GM12878 (cell line): ENCODE measurements at regions of chr20 and their contacts with region 1.

Region 1: DNA sequence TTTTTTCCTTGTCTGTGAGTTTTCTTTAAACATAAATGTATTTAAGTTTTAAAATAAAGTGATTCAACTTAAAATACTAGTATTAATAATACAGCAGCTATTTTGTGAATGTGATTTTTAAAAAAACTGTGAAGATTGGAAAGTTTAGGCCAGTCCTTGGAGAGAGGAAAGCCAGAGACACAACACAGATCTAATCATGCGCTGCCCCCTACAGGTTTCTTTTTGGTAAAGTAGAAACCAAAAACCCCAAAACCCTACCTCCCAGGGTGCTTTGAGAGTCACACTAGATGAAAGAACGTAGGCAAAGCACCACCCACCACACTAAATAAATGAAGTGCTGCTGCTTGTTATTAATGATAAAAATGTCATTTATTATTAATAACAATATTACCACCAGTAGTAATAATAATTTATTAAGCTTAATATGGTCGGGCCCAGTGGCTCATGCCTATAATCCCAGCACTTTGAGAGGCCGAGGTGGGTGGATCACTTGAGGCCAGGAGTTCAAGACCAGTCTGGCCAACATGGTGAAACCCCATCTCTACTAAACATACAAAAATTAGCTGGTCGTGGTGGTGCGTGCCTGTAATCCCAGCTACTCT is 33.7 kb downstream of the SLC9A8 start:
- DNase-seq: no peak
- ATAC-seq: peak; percentile 96
- H3K4me3 ChIP-seq: no peak overlapping the region
- H3K27ac ChIP-seq: no peak overlapping the region
- H3K4me1 ChIP-seq: peaks cover 4% of the 10 kb centered on the region; the same call in 1 of the 2 replicates
- H3K27me3 ChIP-seq: no peaks in the 10 kb centered on the region
- CTCF ChIP-seq: peak; percentile 51 to 77 (median 60)
- EP300 ChIP-seq: no peak
- POLR2A ChIP-seq: no peak
- RAD21 ChIP-seq: peak; percentile 86

Region 2: GRCh38 chr20:49620364-49621240 is 225.7 kb before region 1 on chr20:
- CTCF ChIA-PET with region 1: interaction called, 14 read pairs
- POLR2A ChIA-PET with region 1: interaction called, 6 read pairs
- RAD21 ChIA-PET with region 1: interaction called, 9 read pairs
- SMC1A ChIA-PET with region 1: interaction called, 22 read pairs
- in situ Hi-C with region 1: no loop called
- intact Hi-C with region 1: no loop called
- DNase-seq: peak; percentile 100
- ATAC-seq: peak; percentile 92
- H3K4me3 ChIP-seq: peak overlapping the region; percentile 8; the same call in 1 of the 2 replicates
- H3K27ac ChIP-seq: peak overlapping the region; percentile 57
- H3K4me1 ChIP-seq: peaks cover 37% of the 10 kb centered on the region
- H3K27me3 ChIP-seq: no peaks in the 10 kb centered on the region
- CTCF ChIP-seq: no peak
- EP300 ChIP-seq: peak; percentile 91 to 92
- POLR2A ChIP-seq: no peak
- RAD21 ChIP-seq: peak; percentile 17; the same call in 1 of the 2 replicates

Region 3: DNA sequence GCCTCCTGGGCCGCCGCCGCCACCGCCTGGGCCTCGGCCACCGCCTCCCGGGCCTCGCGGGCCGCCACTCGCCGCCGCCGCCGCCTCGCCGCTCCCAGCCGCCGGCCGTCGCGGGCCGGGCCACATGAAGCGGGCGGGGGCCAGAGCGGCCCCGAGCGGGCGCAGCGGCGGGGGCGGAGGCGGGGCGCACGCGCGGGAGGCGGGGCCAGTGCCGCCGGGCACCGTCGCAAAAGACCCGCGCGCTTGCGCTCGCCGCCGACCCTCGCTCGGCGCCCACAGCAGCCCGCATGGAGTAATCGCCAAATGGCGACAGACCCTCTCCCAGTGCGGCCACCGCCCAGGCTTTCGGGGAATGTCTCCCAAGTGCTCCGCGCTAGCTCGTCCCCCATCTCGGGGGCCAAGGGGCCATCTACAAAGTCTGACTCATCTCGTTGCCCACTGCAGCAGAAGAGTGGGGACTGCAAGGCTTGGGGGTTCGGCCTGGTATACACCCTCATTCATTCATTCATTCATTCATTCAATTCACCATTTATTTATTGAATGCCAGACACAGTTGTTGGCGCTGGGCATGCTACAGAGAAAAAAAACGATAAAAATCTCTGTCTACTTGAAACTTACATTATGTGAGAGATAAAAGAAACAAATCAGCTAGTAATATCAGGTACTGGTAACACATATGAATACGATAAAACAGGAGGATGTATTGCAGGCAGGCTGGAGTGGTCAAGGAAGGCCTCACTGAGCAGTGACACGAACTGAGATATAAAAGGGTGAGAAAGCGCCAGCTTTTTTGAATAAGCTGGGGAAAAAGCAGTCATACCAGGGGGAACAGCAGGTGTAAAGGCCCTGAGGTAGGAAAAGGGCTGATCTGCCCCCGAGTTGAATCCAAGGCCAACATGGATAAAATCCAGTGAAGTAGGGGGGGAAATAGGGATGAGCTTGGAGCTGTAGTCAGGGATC is 132.3 kb before region 1 on chr20 and contains the start of gene B4GALT5:
- CTCF ChIA-PET with region 1: interaction called, 25 read pairs
- POLR2A ChIA-PET with region 1: no interaction called
- RAD21 ChIA-PET with region 1: interaction called, 7 read pairs
- SMC1A ChIA-PET with region 1: interaction called, 6 read pairs
- in situ Hi-C with region 1: no loop called
- intact Hi-C with region 1: no loop called
- DNase-seq: no peak
- ATAC-seq: peak; percentile 76
- H3K4me3 ChIP-seq: peak within 1 kb of the TSS; percentile 97
- H3K27ac ChIP-seq: peak within 1 kb of the TSS; percentile 80
- H3K4me1 ChIP-seq: peaks cover 5% of the 10 kb centered on the region; the same call in 1 of the 2 replicates
- H3K27me3 ChIP-seq: no peaks in the 10 kb centered on the region
- CTCF ChIP-seq: no peak
- EP300 ChIP-seq: no peak
- POLR2A ChIP-seq: no peak
- RAD21 ChIP-seq: no peak
- polyA plus RNA-seq, gene B4GALT5: 10.0 to 15.3 TPM

Region 4: DNA sequence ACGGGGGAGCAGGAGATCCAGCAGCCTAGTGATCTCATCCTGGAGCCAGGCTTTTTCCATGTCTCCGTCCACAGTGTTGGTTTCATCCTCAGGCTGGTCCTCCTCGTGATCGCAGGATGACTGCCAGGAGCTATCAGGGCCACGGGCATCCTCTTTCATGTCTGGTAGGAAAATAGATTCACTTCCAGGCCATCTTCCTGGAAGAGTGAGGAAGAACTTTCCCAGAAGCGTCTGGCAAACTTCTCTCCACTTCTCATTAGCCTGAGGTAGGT is 49.0 kb before region 1 on chr20:
- CTCF ChIA-PET with region 1: interaction called, 15 read pairs
- POLR2A ChIA-PET with region 1: no interaction called
- RAD21 ChIA-PET with region 1: interaction called, 15 read pairs
- SMC1A ChIA-PET with region 1: interaction called, 12 read pairs
- in situ Hi-C with region 1: no loop called
- intact Hi-C with region 1: no loop called
- DNase-seq: no peak
- ATAC-seq: no peak
- H3K4me3 ChIP-seq: no peak overlapping the region
- H3K27ac ChIP-seq: no peak overlapping the region
- H3K4me1 ChIP-seq: peaks cover 18% of the 10 kb centered on the region
- H3K27me3 ChIP-seq: no peaks in the 10 kb centered on the region
- CTCF ChIP-seq: no peak
- EP300 ChIP-seq: no peak
- POLR2A ChIP-seq: no peak
- RAD21 ChIP-seq: no peak

Region 5: DNA sequence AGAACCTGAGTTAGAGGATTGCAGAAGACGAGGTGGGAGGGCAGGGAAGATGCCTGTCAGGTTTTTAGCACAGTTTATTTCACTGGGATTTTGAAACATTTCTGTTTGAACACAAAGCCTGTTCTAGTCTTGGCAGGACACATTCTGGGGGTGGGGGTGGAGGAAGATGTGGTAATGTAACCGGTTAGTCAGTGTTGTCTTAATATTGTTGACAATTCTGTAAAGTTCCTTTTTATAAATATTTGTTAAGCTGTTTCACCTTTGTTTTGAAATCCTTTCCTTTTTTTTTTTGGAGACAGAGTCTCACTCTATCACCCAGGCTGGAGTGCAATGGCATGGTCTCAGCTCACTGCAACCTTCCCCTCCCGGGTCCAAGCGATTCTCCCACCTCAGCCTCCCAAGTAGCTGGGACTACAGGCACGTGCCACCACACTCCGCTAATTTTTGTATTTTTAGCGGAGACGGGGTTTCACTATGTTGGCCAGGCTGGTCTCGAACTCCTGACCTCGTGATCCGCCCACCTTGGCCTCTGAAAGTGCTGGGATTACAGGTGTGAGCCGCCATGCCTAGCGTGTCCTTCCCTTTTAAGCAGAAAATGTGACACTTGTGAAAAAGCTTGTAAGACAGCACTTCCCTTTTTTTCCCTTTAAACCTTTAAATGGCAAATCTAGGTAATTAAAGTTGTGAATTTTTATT is 13.5 kb before region 1 on chr20:
- CTCF ChIA-PET with region 1: interaction called, 22 read pairs
- POLR2A ChIA-PET with region 1: no interaction called
- RAD21 ChIA-PET with region 1: interaction called, 3 read pairs
- SMC1A ChIA-PET with region 1: interaction called, 11 read pairs
- in situ Hi-C with region 1: no loop called
- intact Hi-C with region 1: no loop called
- DNase-seq: no peak
- ATAC-seq: peak; percentile 31
- H3K4me3 ChIP-seq: no peak overlapping the region
- H3K27ac ChIP-seq: peak overlapping the region; percentile 58
- H3K4me1 ChIP-seq: peaks cover 17% of the 10 kb centered on the region
- H3K27me3 ChIP-seq: no peaks in the 10 kb centered on the region
- CTCF ChIP-seq: no peak
- EP300 ChIP-seq: no peak
- POLR2A ChIP-seq: no peak
- RAD21 ChIP-seq: no peak

Region 6: GRCh38 chr20:50338479-50339391 is 492.4 kb after region 1 on chr20:
- CTCF ChIA-PET with region 1: no interaction called
- POLR2A ChIA-PET with region 1: no interaction called
- RAD21 ChIA-PET with region 1: no interaction called
- SMC1A ChIA-PET with region 1: no interaction called
- in situ Hi-C with region 1: no loop called
- intact Hi-C with region 1: no loop called
- DNase-seq: peak; percentile 92
- ATAC-seq: peak; percentile 86
- H3K4me3 ChIP-seq: peak overlapping the region; percentile 19; the same call in 1 of the 2 replicates
- H3K27ac ChIP-seq: peak overlapping the region; percentile 93
- H3K4me1 ChIP-seq: peaks cover 61% of the 10 kb centered on the region
- H3K27me3 ChIP-seq: no peaks in the 10 kb centered on the region
- CTCF ChIP-seq: peak in 2 of 3 experiments; percentile 32 to 37; a peak in 3 of 6 replicates
- EP300 ChIP-seq: peak; percentile 46 to 51; a peak in 2 of 4 replicates
- POLR2A ChIP-seq: no peak
- RAD21 ChIP-seq: no peak